ENCODE measurements at regions of chr1 and their contacts with region 1.

Region 1: GRCh38 chr1:86704458-86704971 is at the start of gene SH3GLB1:
- DNase-seq: peak; percentile 90
- H3K4me3 Mint-ChIP-seq: peak within 1 kb of the TSS; percentile 97
- H3K27ac Mint-ChIP-seq: peak within 1 kb of the TSS; percentile 99
- H3K4me1 Mint-ChIP-seq: peaks cover 35% of the 10 kb centered on the region
- H3K27me3 Mint-ChIP-seq: no peaks in the 10 kb centered on the region
- CTCF ChIP-seq: peak; percentile 85
- total RNA-seq, gene SH3GLB1: 108 and 123 TPM in 2 replicates

Region 2: DNA sequence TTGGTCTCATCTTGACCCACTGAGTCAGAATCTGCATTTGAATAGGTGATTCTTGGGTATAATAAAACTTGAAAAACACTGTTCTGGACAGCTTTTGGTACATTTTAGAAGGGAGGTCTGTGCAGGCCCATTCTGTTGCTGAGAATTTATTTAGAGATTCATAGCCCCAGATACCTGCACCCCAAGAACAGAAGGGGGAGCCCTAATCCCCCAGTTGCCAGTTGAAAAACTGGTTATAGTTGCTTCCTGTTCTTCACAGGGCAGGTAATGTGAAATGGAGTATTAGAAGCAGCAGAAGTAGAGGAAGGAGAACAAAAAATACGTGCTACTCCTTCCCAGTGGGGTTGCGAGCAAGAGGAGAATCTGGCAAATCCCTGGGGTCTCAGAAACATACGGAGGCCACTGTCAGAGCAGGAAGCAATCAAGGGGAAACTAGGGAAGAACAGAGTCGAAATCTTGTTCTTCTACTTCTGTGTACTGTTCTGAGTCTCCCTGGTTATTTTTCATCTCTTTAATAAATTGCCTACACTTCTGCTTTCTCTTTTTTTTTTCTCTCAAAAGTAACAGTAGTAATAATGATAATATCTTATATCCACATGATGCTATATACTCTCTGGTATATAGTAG is 285.1 kb before region 1 on chr1:
- CTCF ChIA-PET with region 1: interaction called, 11 read pairs
- POLR2A ChIA-PET with region 1: interaction called, 38 read pairs
- intact Hi-C with region 1: no loop called
- DNase-seq: peak; percentile 73
- H3K4me3 Mint-ChIP-seq: no peak overlapping the region
- H3K27ac Mint-ChIP-seq: peak overlapping the region; percentile 52
- H3K4me1 Mint-ChIP-seq: peaks cover 30% of the 10 kb centered on the region
- H3K27me3 Mint-ChIP-seq: no peaks in the 10 kb centered on the region
- CTCF ChIP-seq: peak; percentile 58

Region 3: DNA sequence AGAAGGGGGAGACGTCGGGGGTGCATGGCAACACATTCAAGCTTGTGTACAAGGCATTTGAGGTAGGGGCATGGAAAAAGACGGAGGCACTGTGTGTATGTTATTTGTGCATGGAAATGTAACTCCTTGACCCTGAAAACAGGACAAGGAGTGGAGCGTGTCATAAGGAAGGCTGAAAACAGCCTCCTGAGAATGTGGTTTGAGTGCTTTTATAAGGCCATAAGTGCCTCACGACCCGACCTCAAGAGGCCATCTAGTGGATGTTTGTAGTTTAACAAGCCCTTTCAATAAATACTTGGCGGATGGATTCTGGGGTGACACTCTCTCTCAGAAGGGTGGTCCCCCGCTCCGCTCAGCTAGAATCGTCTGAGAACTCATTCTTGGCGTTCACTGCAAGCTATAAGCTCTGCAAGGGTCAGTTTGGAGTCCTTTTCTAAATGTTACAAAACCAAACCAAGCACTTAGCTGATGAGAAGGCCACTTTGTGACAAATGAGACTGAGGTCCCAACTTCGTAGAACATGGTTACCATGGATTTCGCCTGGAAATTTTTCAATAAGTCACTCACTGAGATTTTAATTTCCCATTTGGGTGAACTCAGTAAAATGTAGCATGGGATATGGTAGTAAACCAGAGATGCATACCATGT is 196.5 kb before region 1 on chr1:
- CTCF ChIA-PET with region 1: interaction called, 4 read pairs
- POLR2A ChIA-PET with region 1: interaction called, 10 read pairs
- intact Hi-C with region 1: no loop called
- DNase-seq: peak; percentile 40
- H3K4me3 Mint-ChIP-seq: no peak overlapping the region
- H3K27ac Mint-ChIP-seq: no peak overlapping the region
- H3K4me1 Mint-ChIP-seq: no peaks in the 10 kb centered on the region
- H3K27me3 Mint-ChIP-seq: no peaks in the 10 kb centered on the region
- CTCF ChIP-seq: peak; percentile 45

Region 4: GRCh38 chr1:86741947-86742572 is 37.5 kb after region 1 on chr1:
- CTCF ChIA-PET with region 1: interaction called, 17 read pairs
- POLR2A ChIA-PET with region 1: interaction called, 8 read pairs
- intact Hi-C with region 1: loop called (anchors 1 kb)
- DNase-seq: peak; percentile 62
- H3K4me3 Mint-ChIP-seq: no peak overlapping the region
- H3K27ac Mint-ChIP-seq: no peak overlapping the region
- H3K4me1 Mint-ChIP-seq: no peaks in the 10 kb centered on the region
- H3K27me3 Mint-ChIP-seq: no peaks in the 10 kb centered on the region
- CTCF ChIP-seq: peak; percentile 59

Region 5: GRCh38 chr1:86913896-86914634 is 209.6 kb after region 1 on chr1 and contains the start of gene SELENOF:
- CTCF ChIA-PET with region 1: interaction called, 17 read pairs
- POLR2A ChIA-PET with region 1: interaction called, 59 read pairs
- intact Hi-C with region 1: loop called (anchors 1 kb)
- DNase-seq: peak; percentile 100
- H3K4me3 Mint-ChIP-seq: no peak within 1 kb of the TSS
- H3K27ac Mint-ChIP-seq: no peak within 1 kb of the TSS
- H3K4me1 Mint-ChIP-seq: peaks cover 28% of the 10 kb centered on the region
- H3K27me3 Mint-ChIP-seq: no peaks in the 10 kb centered on the region
- CTCF ChIP-seq: no peak
- total RNA-seq, gene SELENOF: 227 TPM in 2 replicates

Region 6: GRCh38 chr1:87084244-87084836 is 379.8 kb after region 1 on chr1:
- CTCF ChIA-PET with region 1: interaction called, 20 read pairs
- POLR2A ChIA-PET with region 1: interaction called, 5 read pairs
- intact Hi-C with region 1: loop called (anchors 10 kb)
- DNase-seq: peak; percentile 35
- H3K4me3 Mint-ChIP-seq: no peak overlapping the region
- H3K27ac Mint-ChIP-seq: peak overlapping the region; percentile 36
- H3K4me1 Mint-ChIP-seq: no peaks in the 10 kb centered on the region
- H3K27me3 Mint-ChIP-seq: no peaks in the 10 kb centered on the region
- CTCF ChIP-seq: peak; percentile 41